A673 (cell line): ENCODE measurements at regions of chr2 and their contacts with region 1.

Region 1: GRCh38 chr2:86790676-86791572 is at the start of gene CD8A:
- DNase-seq: no peak
- H3K4me3 ChIP-seq: no peak within 1 kb of the TSS
- H3K27ac ChIP-seq: no peak within 1 kb of the TSS
- H3K4me1 ChIP-seq: peaks cover 12% of the 10 kb centered on the region
- H3K27me3 ChIP-seq: peaks cover 80% of the 10 kb centered on the region
- CTCF ChIP-seq: no peak
- total RNA-seq, gene CD8A: not detected in 2 replicates

Region 2: GRCh38 chr2:86518481-86518880 is 272.4 kb before region 1 on chr2:
- CTCF ChIA-PET with region 1: no interaction called
- POLR2A ChIA-PET with region 1: no interaction called
- intact Hi-C with region 1: loop called (anchors 10 kb)
- DNase-seq: peak; percentile 49
- H3K4me3 ChIP-seq: no peak overlapping the region
- H3K27ac ChIP-seq: no peak overlapping the region
- H3K4me1 ChIP-seq: no peaks in the 10 kb centered on the region
- H3K27me3 ChIP-seq: no peaks in the 10 kb centered on the region
- CTCF ChIP-seq: peak; percentile 54

Region 3: DNA sequence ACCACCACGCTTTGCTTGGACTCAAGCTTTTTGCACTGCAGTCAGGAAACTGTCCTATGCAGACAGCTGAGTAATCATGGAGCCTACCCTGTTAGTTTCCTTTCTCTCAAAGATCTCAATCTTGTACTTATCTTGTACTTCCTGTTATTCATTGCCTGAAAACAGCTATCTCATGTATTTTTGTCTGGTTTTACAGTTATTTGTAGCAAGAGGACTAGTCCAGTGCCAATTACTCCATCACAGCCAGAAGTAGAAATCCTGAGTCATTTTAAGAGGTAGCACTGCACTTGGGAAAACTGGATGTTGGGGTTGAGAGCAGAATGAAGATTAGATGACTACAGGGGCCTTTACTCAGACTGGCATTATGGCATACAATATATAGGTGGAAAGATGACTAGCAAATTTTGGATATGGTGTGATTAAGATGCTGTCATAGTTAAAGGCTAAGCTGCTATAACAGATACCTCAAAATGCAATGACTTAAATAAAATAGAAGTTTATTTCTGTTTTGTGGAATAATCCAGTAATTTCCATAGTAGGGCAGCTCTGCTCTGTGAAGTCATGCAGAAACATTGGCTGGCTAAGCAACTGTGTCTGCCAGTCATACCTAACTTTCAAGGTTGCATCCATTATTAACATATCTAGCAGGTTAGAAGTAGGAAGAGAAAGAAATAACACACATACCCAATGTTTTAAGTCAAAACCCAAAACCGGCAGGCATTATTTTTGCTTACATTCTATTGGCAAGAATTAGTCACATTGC is 206.6 kb before region 1 on chr2:
- CTCF ChIA-PET with region 1: no interaction called
- POLR2A ChIA-PET with region 1: interaction called, 14 read pairs
- intact Hi-C with region 1: no loop called
- DNase-seq: peak; percentile 9
- H3K4me3 ChIP-seq: no peak overlapping the region
- H3K27ac ChIP-seq: no peak overlapping the region
- H3K4me1 ChIP-seq: no peaks in the 10 kb centered on the region
- H3K27me3 ChIP-seq: no peaks in the 10 kb centered on the region
- CTCF ChIP-seq: no peak